Activated CD8-positive, alpha-beta T cell treated with anti-CD3 and anti-CD28 coated beads, Interleukin-2, amount 10 ng/mL, durations not matched to agents 7 days and 5 days (primary cell): ENCODE measurements at regions of chr12 and their contacts with region 1.

Region 1: GRCh38 chr12:12467688-12468261 is 94.9 kb downstream of the DUSP16 start:
- DNase-seq: no peak
- ATAC-seq: peak; percentile 48
- H3K4me3 Mint-ChIP-seq: no peak overlapping the region
- H3K27ac Mint-ChIP-seq: peak overlapping the region; percentile 31
- H3K4me1 Mint-ChIP-seq: peaks cover 64% of the 10 kb centered on the region
- H3K27me3 Mint-ChIP-seq: no peaks in the 10 kb centered on the region

Region 2: DNA sequence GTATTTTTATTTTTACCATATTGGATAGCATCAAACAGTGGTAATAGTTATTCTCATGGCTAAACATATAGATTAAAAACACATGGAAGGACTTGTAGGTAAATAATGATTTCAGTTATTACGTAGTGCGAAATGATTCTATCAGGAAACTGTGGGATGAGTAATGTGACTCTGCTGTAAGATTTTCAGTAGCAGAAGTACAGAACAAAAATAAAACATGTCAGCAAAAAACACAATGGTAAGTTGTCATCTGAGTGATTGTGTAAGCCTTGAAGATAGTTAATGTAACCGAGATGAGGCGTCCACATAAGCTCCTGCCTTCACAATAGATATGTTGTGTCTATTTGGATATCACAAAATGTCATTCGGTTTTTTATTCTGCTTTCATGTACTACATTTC is 11.1 kb before region 1 on chr12:
- CTCF ChIA-PET with region 1: interaction called, 11 read pairs
- POLR2A ChIA-PET with region 1: interaction called, 12 read pairs
- DNase-seq: no peak
- ATAC-seq: peak; percentile 33
- H3K4me3 Mint-ChIP-seq: no peak overlapping the region
- H3K27ac Mint-ChIP-seq: peak overlapping the region; percentile 58
- H3K4me1 Mint-ChIP-seq: peaks cover 24% of the 10 kb centered on the region
- H3K27me3 Mint-ChIP-seq: no peaks in the 10 kb centered on the region